ENCODE measurements at regions of chr2 and their contacts with region 1.

Region 1: GRCh38 chr2:215579809-215580208 is 143.9 kb upstream of the FN1 start:
- DNase-seq: no peak
- ATAC-seq: no peak
- H3K4me3 ChIP-seq: no peak overlapping the region
- H3K4me3 Mint-ChIP-seq: no peak overlapping the region
- H3K27ac ChIP-seq: no peak overlapping the region
- H3K27ac Mint-ChIP-seq: no peak overlapping the region
- H3K4me1 ChIP-seq: no peaks in the 10 kb centered on the region
- H3K4me1 Mint-ChIP-seq: no peaks in the 10 kb centered on the region
- H3K27me3 ChIP-seq: no peaks in the 10 kb centered on the region
- H3K27me3 Mint-ChIP-seq: no peaks in the 10 kb centered on the region
- CTCF ChIP-seq: no peak

Region 2: DNA sequence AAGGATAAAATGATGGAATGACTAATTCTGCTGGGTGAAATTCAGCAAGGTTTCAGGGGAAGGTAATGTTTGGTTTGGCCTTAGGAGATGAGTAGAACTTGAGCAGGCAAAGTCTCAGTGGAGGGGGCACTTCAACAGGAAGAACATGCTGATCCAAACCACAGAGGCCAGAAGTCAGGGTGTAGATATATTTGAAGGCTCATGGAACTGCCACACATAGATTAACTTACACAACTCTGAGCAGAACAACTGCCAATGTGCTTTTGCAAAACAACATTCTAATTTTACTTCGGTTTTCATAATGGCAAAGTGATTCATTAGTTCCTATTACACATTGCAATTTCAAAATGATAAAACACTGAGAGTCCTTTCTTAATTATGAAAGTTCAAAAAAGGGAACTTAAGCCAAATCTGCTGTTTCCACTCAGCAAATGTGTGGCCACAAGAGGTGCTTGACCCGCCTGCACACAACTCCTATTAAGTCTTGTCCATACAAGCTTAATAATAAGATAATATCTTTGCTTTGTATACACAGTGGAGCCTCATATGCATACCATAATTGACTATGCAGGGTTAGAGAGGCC is 148.8 kb after region 1 on chr2:
- CTCF ChIA-PET with region 1: no interaction called
- POLR2A ChIA-PET with region 1: no interaction called
- intact Hi-C with region 1: loop called in 1 of 2 experiments (anchors 10 kb)
- DNase-seq: peak in 3 of 14 experiments; percentile 11 to 39 (median 31)
- ATAC-seq: no peak
- H3K4me3 ChIP-seq: no peak overlapping the region
- H3K4me3 Mint-ChIP-seq: no peak overlapping the region
- H3K27ac ChIP-seq: no peak overlapping the region
- H3K27ac Mint-ChIP-seq: no peak overlapping the region
- H3K4me1 ChIP-seq: no peaks in the 10 kb centered on the region
- H3K4me1 Mint-ChIP-seq: peaks cover 6% of the 10 kb centered on the region
- H3K27me3 ChIP-seq: no peaks in the 10 kb centered on the region
- H3K27me3 Mint-ChIP-seq: no peaks in the 10 kb centered on the region
- CTCF ChIP-seq: no peak

Region 3: DNA sequence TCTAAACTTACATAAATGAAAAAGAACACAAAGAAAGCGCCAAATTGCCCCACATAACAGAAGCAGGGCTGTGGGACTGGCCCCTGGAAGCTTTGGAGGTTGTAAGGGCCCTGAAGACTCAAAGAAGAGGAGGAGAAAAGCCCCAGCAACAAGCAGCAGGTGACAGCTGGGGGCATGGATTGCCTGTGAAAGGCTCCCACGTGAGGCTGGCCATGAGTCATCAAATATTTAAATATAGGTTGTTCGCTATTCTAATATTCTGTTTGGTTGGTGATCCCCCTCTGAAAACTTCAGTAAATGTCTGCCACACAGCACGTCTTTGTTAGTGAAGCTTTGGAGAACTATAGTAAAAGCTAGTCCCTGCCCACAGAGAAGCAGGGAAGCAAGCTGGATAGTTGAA is 301.2 kb after region 1 on chr2:
- CTCF ChIA-PET with region 1: no interaction called
- POLR2A ChIA-PET with region 1: no interaction called
- intact Hi-C with region 1: no loop called
- DNase-seq: no peak
- ATAC-seq: no peak
- H3K4me3 ChIP-seq: no peak overlapping the region
- H3K4me3 Mint-ChIP-seq: no peak overlapping the region
- H3K27ac ChIP-seq: no peak overlapping the region
- H3K27ac Mint-ChIP-seq: no peak overlapping the region
- H3K4me1 ChIP-seq: no peaks in the 10 kb centered on the region
- H3K4me1 Mint-ChIP-seq: no peaks in the 10 kb centered on the region
- H3K27me3 ChIP-seq: peaks cover 0 to 7% of the 10 kb centered on the region in 2 experiments
- H3K27me3 Mint-ChIP-seq: no peaks in the 10 kb centered on the region
- CTCF ChIP-seq: no peak